Left colon (tissue), 2 donors: ENCODE measurements at regions of chr1 and their contacts with region 1.

Region 1: GRCh38 chr1:12314333-12314903 is 84.6 kb downstream of the VPS13D start:
- DNase-seq: no peak
- ATAC-seq: peak; percentile 56

Region 2: GRCh38 chr1:12229835-12230548 is 84.4 kb before region 1 on chr1 and contains the start of gene VPS13D:
- intact Hi-C with region 1: no loop called
- DNase-seq: peak; percentile 79 to 90
- ATAC-seq: peak; percentile 81
- total RNA-seq, gene VPS13D: 76.1 to 99.9 TPM

Region 3: DNA sequence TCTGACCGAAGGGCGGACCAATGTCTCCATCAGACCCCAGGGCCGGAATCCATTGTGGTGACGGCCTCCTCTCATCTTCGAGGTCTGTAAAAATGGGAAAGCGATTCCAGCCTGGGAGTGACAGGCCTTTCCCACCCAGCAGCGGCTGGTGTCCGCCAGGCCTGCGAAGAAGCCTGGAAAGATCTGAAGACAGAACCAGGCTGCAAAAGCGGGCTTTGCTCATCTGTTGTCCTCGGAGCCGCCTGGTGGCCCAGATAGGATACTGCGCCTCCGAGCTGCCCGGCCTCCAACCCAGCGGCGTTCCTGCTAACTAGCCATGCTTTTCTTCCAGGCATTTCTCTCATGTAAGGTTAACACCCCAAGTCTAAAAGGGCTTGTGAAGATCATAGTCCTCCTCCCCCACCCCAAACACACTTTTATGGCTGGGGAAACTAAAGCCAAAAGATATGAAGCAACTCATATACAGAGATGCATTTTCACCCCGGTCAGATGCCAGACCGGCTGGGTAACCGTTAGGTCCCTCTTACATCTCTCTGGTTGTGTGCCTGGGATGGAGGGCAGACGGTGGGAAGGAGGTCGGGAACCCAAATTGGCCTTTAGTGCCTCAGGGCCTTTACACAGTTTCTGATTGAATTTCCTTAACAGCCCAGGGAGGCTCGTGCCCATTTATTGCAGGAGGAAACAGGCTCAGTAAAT is 305.5 kb after region 1 on chr1:
- intact Hi-C with region 1: loop called in 1 of 2 experiments (anchors 10 kb)
- DNase-seq: peak; percentile 86 to 87
- ATAC-seq: peak; percentile 45

Region 4: DNA sequence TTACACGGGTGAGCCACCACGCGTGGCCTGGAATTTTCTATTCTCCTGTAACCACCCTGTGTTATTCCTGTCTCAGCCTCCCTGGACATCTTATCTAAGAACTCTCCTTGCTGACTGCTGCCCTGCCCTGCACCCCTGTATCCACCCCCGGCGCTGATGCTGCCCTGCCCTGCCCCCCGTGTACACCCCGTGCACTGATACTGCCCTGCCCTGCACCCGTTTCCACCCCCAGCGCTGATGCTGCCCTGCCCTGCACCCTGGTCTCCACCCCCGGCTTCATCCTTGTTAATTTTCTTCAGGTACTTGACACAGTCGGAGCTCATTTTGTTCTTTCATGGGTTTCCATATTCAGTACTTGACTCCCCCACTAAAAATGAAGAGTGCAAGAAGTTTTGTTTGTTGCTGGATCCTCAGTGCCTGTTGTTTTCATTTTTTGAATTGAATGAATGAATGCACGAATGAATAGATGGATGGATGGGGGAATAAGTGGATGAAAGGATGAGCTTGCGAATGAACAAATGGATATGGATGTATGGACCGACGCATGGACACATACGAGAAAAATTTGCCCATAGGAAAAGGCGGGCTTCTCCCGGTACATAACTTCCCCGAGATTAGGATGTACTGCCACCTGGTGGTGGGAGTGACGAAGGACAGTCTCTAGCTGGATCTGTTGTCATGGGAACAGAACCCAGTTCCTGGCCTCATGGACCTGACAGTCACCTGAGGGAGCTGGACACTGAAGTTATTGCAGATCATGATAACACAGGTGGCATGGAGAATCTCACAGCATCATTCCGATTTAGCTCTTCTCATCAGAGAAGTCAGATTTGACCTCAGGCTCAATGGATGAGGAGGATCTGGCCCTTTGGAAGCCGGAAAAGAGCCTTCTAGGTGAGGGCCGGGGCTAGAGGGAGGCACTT is 344.4 kb after region 1 on chr1:
- intact Hi-C with region 1: loop called (anchors 5 to 10 kb)
- DNase-seq: peak; percentile 54 to 68
- ATAC-seq: peak; percentile 91